Breast epithelium (tissue), 4 donors: ENCODE measurements at regions of chr1 and their contacts with region 1.

Region 1: GRCh38 chr1:40072142-40072541 is 24.9 kb downstream of the PPT1 start:
- DNase-seq: no peak
- H3K4me3 ChIP-seq: no peak overlapping the region
- H3K27ac ChIP-seq: no peak overlapping the region
- H3K4me1 ChIP-seq: no peaks in the 10 kb centered on the region
- H3K27me3 ChIP-seq: no peaks in the 10 kb centered on the region
- CTCF ChIP-seq: no peak
- POLR2A ChIP-seq: no peak

Region 2: DNA sequence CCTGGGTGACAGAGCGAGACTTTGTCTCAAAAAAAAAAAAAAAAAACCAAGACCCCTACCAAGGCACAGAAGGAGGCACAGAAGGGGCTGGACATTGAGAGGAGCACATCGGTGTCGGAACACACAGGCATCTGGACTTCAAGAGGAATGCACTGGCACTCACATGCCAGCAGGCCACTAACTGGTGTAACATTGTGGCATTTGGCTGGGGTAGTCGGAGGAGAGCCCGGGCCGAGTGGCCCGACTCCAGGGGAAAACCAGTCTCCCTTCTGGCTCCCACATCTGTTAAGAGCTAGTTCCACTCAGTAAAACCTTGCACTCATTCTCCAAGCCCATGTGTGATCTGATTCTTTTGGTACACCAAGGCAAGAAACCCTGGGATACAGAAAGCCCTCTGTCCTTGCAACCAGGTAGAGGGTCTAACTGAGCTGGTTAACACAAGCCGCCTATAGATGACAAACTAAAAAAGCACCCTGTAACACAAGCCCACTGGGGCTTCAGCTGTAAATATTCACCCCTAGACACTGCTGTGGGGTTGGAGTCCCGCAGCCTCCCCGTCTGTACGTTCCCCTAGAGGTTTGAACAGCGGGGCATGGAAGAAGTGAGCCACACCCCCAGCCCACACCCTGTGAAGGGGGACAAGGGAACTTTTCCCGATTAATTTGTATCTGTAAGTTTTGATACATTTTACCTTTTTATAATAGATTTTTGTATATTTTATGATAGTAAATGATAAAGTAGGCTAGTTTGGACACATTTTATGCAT is 1098.3 kb before region 1 on chr1:
- intact Hi-C with region 1: no loop called
- DNase-seq: no peak
- H3K4me3 ChIP-seq: no peak overlapping the region
- H3K27ac ChIP-seq: no peak overlapping the region
- H3K4me1 ChIP-seq: no peaks in the 10 kb centered on the region
- H3K27me3 ChIP-seq: no peaks in the 10 kb centered on the region
- CTCF ChIP-seq: no peak
- POLR2A ChIP-seq: no peak

Region 3: GRCh38 chr1:39034114-39034654 is 1038.0 kb before region 1 on chr1:
- intact Hi-C with region 1: no loop called
- DNase-seq: no peak
- H3K4me3 ChIP-seq: peak overlapping the region in 1 of 3 donors; percentile 19
- H3K27ac ChIP-seq: peak overlapping the region; percentile 35 to 63
- H3K4me1 ChIP-seq: no peaks in the 10 kb centered on the region
- H3K27me3 ChIP-seq: no peaks in the 10 kb centered on the region
- CTCF ChIP-seq: no peak
- POLR2A ChIP-seq: no peak

Region 4: GRCh38 chr1:39632682-39633417 is 439.3 kb before region 1 on chr1:
- intact Hi-C with region 1: loop called (anchors 5 kb)
- DNase-seq: no peak
- H3K4me3 ChIP-seq: peak overlapping the region in 2 of 3 donors; percentile 34 to 55
- H3K27ac ChIP-seq: peak overlapping the region in 1 of 2 donors; percentile 49
- H3K4me1 ChIP-seq: no peaks in the 10 kb centered on the region
- H3K27me3 ChIP-seq: peaks cover 0 to 28% of the 10 kb centered on the region in 2 donors
- CTCF ChIP-seq: no peak
- POLR2A ChIP-seq: no peak

Region 5: DNA sequence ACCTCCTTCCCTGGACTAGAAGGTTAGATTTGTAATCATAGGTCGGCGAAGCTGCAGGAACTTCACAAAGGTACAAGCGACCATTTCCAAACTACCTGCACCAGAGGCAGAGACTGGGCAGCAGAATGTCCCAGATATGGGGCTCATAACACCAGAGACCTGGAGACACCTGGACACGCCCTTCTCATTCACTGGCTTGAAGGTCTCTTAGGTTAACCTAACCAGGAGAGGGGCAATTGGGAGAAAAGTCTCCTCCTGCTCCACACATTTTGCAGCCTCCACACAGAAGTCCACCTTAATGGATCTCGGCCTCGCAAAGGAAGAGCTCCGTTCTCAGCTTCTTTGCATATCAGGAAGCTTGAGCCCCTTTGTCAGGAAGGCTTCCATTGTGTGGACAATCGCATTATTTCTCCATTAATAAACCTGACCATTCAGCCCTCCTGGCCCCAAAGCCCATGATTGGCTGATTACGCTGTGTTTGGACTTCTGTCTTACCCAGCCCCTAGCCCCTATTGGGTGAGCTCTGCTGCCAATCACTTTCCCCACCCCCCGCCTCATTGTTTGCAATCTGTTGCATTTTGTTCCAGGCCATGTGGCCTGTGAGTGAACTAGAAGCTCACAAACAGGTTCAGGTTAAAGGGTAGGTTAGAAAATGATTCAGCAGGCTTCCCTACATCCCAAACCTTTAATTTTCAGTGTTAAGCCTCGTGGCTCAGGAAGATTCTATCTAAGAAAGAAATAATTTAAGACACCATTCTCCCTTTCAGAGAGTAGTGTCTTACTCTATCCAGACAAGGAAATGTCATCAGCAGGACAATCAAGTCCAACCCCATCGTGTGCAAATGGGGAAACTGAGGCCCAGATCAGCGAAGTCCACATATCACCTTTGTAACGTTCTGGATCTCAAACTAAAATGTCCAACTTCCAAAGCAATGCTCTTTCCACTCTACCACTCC is 173.2 kb before region 1 on chr1:
- intact Hi-C with region 1: no loop called
- DNase-seq: no peak
- H3K4me3 ChIP-seq: no peak overlapping the region
- H3K27ac ChIP-seq: no peak overlapping the region
- H3K4me1 ChIP-seq: peaks cover 0 to 8% of the 10 kb centered on the region in 2 donors
- H3K27me3 ChIP-seq: peaks cover 0 to 2% of the 10 kb centered on the region in 2 donors
- CTCF ChIP-seq: no peak
- POLR2A ChIP-seq: no peak